CD4-positive, alpha-beta T cell (primary cell): ENCODE measurements at regions of chr14 and their contacts with region 1.

Region 1: GRCh38 chr14:77097700-77098528 is at the start of gene CIPC:
- DNase-seq: peak; percentile 97 to 100 (median 99)
- ATAC-seq: peak; percentile 84
- H3K4me3 ChIP-seq: peak within 1 kb of the TSS; percentile 97
- H3K4me3 Mint-ChIP-seq: peak within 1 kb of the TSS; percentile 98
- H3K27ac ChIP-seq: peak within 1 kb of the TSS; percentile 83 to 95
- H3K27ac Mint-ChIP-seq: peak within 1 kb of the TSS; percentile 94
- H3K4me1 ChIP-seq: peaks cover 27% of the 10 kb centered on the region
- H3K4me1 Mint-ChIP-seq: peaks cover 48% of the 10 kb centered on the region
- H3K27me3 ChIP-seq: no peaks in the 10 kb centered on the region
- H3K27me3 Mint-ChIP-seq: no peaks in the 10 kb centered on the region
- CTCF ChIP-seq: no peak
- total RNA-seq, gene CIPC: 8.2 to 10.7 TPM

Region 2: GRCh38 chr14:76151398-76152339 is 946.2 kb before region 1 on chr14 and contains the start of gene GPATCH2L:
- CTCF ChIA-PET with region 1: no interaction called
- POLR2A ChIA-PET with region 1: no interaction called
- intact Hi-C with region 1: loop called in 1 of 2 experiments (anchors 5 kb)
- DNase-seq: peak; percentile 93 to 99 (median 96)
- ATAC-seq: peak; percentile 85
- H3K4me3 ChIP-seq: peak within 1 kb of the TSS; percentile 97
- H3K4me3 Mint-ChIP-seq: peak within 1 kb of the TSS; percentile 96
- H3K27ac ChIP-seq: peak within 1 kb of the TSS; percentile 94 to 95
- H3K27ac Mint-ChIP-seq: peak within 1 kb of the TSS; percentile 95
- H3K4me1 ChIP-seq: peaks cover 39% of the 10 kb centered on the region
- H3K4me1 Mint-ChIP-seq: peaks cover 57% of the 10 kb centered on the region
- H3K27me3 ChIP-seq: no peaks in the 10 kb centered on the region
- H3K27me3 Mint-ChIP-seq: no peaks in the 10 kb centered on the region
- CTCF ChIP-seq: no peak
- total RNA-seq, gene GPATCH2L: 56.0 to 61.5 TPM

Region 3: GRCh38 chr14:76812211-76813044 is 285.5 kb before region 1 on chr14 and contains the start of gene ANGEL1:
- CTCF ChIA-PET with region 1: no interaction called
- POLR2A ChIA-PET with region 1: interaction called, 3 read pairs
- intact Hi-C with region 1: loop called in 1 of 2 experiments (anchors 1 kb)
- DNase-seq: peak; percentile 94 to 99 (median 98)
- ATAC-seq: peak; percentile 90
- H3K4me3 ChIP-seq: peak within 1 kb of the TSS; percentile 84
- H3K4me3 Mint-ChIP-seq: peak within 1 kb of the TSS; percentile 97
- H3K27ac ChIP-seq: peak within 1 kb of the TSS; percentile 67 to 85
- H3K27ac Mint-ChIP-seq: peak within 1 kb of the TSS; percentile 96
- H3K4me1 ChIP-seq: peaks cover 28% of the 10 kb centered on the region
- H3K4me1 Mint-ChIP-seq: peaks cover 35% of the 10 kb centered on the region
- H3K27me3 ChIP-seq: no peaks in the 10 kb centered on the region
- H3K27me3 Mint-ChIP-seq: no peaks in the 10 kb centered on the region
- CTCF ChIP-seq: no peak
- total RNA-seq, gene ANGEL1: 10.1 to 10.4 TPM

Region 4: DNA sequence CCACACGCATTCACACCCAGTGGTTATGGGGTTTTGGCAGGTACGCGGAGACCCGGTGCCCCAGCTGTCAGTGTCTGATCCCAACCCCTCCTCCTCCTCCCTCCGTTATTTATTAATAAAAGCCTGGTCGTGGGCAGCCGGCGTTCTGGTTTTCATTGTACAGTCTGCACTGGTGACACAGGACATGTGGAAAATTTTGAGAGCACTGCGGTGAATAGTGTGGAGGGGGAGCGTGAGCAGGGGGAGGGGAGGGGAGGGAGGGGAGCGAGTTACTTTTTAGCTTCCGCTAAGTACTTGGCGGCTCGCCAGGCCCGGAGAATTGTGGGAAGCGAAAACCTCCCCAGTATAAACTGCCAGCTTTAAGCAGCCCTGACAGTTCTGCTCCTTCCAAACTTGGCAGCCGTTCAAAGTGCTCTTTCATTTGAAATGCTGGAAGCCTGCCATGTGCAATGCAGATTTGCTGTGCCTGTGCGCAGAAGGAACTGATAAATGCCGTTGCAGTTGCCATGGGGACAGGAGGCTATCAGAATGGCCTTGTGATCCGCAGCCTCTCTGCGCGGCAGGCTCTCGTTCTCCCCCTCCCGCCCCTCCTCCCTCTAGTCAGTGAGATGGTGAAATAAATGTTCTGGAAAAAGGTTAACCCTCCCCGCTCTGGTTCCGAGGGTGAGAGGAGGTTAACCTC is 57.7 kb before region 1 on chr14:
- CTCF ChIA-PET with region 1: no interaction called
- POLR2A ChIA-PET with region 1: no interaction called
- intact Hi-C with region 1: loop called (anchors 5 kb)
- DNase-seq: peak; percentile 96 to 100 (median 99)
- ATAC-seq: peak; percentile 79
- H3K4me3 ChIP-seq: peak overlapping the region; percentile 46
- H3K4me3 Mint-ChIP-seq: peak overlapping the region; percentile 84
- H3K27ac ChIP-seq: peak overlapping the region; percentile 93 to 96
- H3K27ac Mint-ChIP-seq: peak overlapping the region; percentile 100
- H3K4me1 ChIP-seq: peaks cover 86% of the 10 kb centered on the region
- H3K4me1 Mint-ChIP-seq: peaks cover 96% of the 10 kb centered on the region
- H3K27me3 ChIP-seq: no peaks in the 10 kb centered on the region
- H3K27me3 Mint-ChIP-seq: no peaks in the 10 kb centered on the region
- CTCF ChIP-seq: no peak

Region 5: DNA sequence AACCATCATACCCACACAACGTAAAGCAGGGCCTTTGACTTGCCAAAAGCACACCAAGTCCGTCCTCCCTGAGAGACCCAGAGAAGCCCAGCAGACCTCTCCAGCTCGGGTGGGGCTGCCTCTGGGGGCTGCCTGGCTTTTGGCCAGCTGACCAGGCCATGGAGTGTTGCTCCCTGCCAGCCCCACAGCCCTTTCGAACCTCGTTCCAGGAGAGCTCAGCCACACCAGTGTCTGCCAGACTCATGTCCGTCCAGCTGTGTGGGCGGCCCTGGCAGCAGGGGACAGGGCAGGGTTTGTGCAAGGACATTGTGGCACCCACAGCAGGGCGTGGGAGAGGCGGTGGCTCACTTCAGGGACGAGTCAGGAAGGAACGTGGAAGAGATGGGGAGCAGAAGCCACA is 46.8 kb before region 1 on chr14:
- CTCF ChIA-PET with region 1: no interaction called
- POLR2A ChIA-PET with region 1: no interaction called
- intact Hi-C with region 1: no loop called
- DNase-seq: no peak
- ATAC-seq: no peak
- H3K4me3 ChIP-seq: no peak overlapping the region
- H3K4me3 Mint-ChIP-seq: no peak overlapping the region
- H3K27ac ChIP-seq: no peak overlapping the region
- H3K27ac Mint-ChIP-seq: no peak overlapping the region
- H3K4me1 ChIP-seq: peaks cover 33% of the 10 kb centered on the region
- H3K4me1 Mint-ChIP-seq: peaks cover 30% of the 10 kb centered on the region
- H3K27me3 ChIP-seq: no peaks in the 10 kb centered on the region
- H3K27me3 Mint-ChIP-seq: no peaks in the 10 kb centered on the region
- CTCF ChIP-seq: no peak

Region 6: DNA sequence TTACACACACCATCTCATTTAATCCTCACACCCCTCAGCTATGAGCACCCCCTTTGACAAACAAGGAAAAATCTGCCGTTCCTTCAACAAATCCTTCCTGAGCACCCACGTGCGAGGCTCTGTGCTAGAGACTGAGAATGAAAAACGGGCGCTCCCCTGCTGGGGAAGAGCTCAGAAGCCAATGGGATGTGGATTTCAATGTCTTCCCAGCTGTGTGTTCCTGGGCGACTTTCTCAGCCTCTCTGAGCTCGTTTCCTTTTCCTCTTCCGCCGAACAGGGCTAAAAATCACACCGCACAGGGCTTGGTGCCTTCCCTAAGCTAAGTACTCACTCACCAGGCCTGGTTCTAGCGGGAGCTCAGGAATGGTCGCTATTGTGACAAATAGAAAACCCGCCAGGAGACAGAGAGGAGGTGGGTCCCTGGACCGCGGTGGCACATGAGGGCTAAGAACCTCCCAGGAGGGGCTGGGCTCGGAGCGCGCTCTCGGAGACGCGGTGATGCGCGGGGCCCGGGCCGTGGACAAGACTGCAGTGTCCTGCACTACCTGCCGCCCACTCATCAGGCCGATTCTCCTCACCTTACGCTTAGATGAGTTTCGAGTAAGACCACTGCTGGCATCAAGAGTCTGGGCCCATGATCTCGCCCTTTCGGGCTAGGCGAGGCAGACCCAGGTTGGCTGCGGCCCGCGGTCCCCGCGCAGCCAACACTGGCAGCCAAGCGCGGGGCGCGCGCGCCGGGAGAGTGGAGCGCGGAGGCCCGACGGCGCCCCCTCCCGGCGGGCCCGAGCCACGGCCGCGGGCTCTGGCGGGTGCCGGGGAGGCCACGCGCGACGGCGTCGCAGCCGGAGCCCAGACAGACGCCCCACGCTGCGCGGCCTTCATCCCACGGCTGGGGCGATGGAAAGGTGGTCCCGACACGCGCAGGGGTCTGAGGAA is 26.7 kb after region 1 on chr14:
- CTCF ChIA-PET with region 1: interaction called, 4 read pairs
- POLR2A ChIA-PET with region 1: interaction called, 64 read pairs
- intact Hi-C with region 1: loop called (anchors 2 to 5 kb)
- DNase-seq: peak; percentile 40 to 90 (median 60)
- ATAC-seq: peak; percentile 74
- H3K4me3 ChIP-seq: peak overlapping the region; percentile 82
- H3K4me3 Mint-ChIP-seq: peak overlapping the region; percentile 79
- H3K27ac ChIP-seq: peak overlapping the region in 1 of 2 donors; percentile 37
- H3K27ac Mint-ChIP-seq: peak overlapping the region; percentile 93
- H3K4me1 ChIP-seq: peaks cover 60% of the 10 kb centered on the region
- H3K4me1 Mint-ChIP-seq: peaks cover 58% of the 10 kb centered on the region
- H3K27me3 ChIP-seq: peaks cover 11 to 21% of the 10 kb centered on the region in 2 experiments
- H3K27me3 Mint-ChIP-seq: peaks cover 42% of the 10 kb centered on the region
- CTCF ChIP-seq: peak; percentile 50

Region 7: DNA sequence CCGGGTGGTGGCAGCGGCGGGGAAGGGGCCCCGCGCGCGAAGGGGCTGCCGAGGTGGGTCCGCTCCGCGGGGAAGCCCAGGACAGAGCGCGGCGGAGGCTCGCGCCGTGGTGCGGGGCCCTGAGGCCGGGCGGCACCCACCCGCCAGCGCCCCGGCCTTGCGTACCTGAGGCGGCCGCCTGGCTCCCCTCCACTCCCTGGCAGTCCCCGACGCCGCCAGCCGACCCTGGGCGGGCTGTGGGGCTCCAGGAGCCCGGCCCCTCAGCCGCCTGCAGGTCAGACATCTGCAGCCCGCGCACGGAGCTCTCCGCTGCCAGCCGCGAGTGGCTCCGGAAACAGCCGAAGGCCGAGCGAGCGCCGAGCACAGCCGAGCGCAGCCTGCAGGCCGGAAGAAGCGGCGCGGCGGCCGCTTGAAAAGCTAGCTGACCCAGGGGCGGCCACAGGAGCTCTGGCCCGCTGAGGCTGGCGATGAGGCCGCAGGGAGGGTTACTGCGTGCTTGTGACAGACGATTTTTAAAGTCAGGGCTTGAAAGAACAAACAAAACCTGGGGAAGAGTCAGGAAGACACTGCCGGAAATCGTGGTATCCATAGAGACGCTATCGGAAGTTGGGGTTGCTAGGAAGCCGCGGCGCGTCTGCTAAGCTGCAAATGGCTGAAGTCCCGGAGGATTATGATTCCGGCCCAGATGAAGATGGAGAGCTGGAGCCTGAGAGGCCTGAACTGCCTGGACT is 279.0 kb after region 1 on chr14 and contains the starts of genes SAMD15 and TMED8:
- CTCF ChIA-PET with region 1: interaction called, 4 read pairs
- POLR2A ChIA-PET with region 1: interaction called, 4 read pairs
- intact Hi-C with region 1: loop called in 1 of 2 experiments (anchors 5 kb)
- DNase-seq: peak; percentile 61 to 93 (median 79)
- ATAC-seq: peak; percentile 96
- H3K4me3 ChIP-seq: peak within 1 kb of the TSS; percentile 78
- H3K4me3 Mint-ChIP-seq: peak within 1 kb of the TSS; percentile 95
- H3K27ac ChIP-seq: peak within 1 kb of the TSS; percentile 67 to 89
- H3K27ac Mint-ChIP-seq: peak within 1 kb of the TSS; percentile 74
- H3K4me1 ChIP-seq: peaks cover 21% of the 10 kb centered on the region
- H3K4me1 Mint-ChIP-seq: peaks cover 41% of the 10 kb centered on the region
- H3K27me3 ChIP-seq: no peaks in the 10 kb centered on the region
- H3K27me3 Mint-ChIP-seq: no peaks in the 10 kb centered on the region
- CTCF ChIP-seq: no peak
- total RNA-seq, gene SAMD15: 0.34 TPM in 1 of 2 experiments, not detected in the other
- total RNA-seq, gene TMED8: 4.9 to 5.1 TPM

Region 8: GRCh38 chr14:77760381-77761246 is 662.7 kb after region 1 on chr14 and contains the start of gene SNW1:
- CTCF ChIA-PET with region 1: no interaction called
- POLR2A ChIA-PET with region 1: no interaction called
- intact Hi-C with region 1: loop called in 1 of 2 experiments (anchors 5 kb)
- DNase-seq: peak; percentile 79 to 98 (median 87)
- ATAC-seq: peak; percentile 90
- H3K4me3 ChIP-seq: peak within 1 kb of the TSS; percentile 59
- H3K4me3 Mint-ChIP-seq: peak within 1 kb of the TSS; percentile 99
- H3K27ac ChIP-seq: peak within 1 kb of the TSS; percentile 89 to 94
- H3K27ac Mint-ChIP-seq: peak within 1 kb of the TSS; percentile 99
- H3K4me1 ChIP-seq: peaks cover 42% of the 10 kb centered on the region
- H3K4me1 Mint-ChIP-seq: peaks cover 45% of the 10 kb centered on the region
- H3K27me3 ChIP-seq: no peaks in the 10 kb centered on the region
- H3K27me3 Mint-ChIP-seq: no peaks in the 10 kb centered on the region
- CTCF ChIP-seq: no peak
- total RNA-seq, gene SNW1: 131 to 136 TPM